Tibial artery (tissue), 4 donors: ENCODE measurements at regions of chr16 and their contacts with region 1.

Region 1: DNA sequence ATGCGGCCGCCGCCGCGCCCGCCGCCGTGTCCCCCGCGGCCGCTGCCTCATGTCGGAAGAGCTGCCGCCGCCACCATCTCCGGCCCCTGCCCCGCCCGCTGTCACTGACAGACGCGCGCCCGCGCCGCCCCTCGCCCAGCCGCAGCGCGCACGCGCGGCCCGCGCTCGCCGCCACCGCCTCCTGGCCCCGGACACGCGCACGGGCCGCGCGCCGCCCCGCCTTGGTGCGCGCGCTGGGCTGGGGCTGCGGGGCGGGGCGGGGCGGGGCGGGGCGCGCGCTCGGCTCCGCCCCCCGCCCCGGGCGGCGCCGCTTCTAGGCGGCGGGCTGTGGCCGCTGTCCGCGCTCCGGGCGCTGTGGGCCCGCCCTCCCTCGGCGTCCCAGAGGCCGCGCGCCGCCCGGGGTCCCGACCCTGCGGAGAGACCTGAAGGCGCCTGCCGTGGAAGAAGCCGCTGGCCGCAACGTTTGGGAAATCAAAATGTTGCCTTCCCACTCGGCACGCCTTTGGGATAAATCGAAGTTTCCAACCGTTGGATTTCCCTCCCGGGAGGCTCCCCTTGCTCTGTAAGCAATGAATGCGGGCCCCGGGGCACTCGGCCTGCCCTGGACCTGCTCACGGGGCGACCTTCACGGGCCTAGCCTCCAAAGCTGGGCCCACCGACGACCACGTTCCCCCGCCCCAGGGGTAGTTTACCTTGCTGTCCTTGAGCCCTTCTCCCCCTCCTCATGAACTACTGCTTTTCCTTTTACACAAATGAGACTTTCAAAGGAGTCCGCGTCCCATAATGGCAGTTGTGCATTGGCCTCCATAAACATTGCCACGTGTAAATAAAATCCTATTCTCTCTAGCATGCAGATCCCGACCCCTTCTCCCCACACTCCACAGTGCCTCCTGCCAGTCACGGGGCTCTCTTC is at the start of gene ADCY9:
- DNase-seq: peak; percentile 69 to 86
- H3K4me3 ChIP-seq: peak within 1 kb of the TSS; percentile 68 to 72
- H3K27ac ChIP-seq: peak within 1 kb of the TSS; percentile 88 to 89
- H3K4me1 ChIP-seq: peaks cover 0 to 34% (median 25%) of the 10 kb centered on the region in 4 donors
- H3K27me3 ChIP-seq: no peaks in the 10 kb centered on the region
- CTCF ChIP-seq: no peak

Region 2: DNA sequence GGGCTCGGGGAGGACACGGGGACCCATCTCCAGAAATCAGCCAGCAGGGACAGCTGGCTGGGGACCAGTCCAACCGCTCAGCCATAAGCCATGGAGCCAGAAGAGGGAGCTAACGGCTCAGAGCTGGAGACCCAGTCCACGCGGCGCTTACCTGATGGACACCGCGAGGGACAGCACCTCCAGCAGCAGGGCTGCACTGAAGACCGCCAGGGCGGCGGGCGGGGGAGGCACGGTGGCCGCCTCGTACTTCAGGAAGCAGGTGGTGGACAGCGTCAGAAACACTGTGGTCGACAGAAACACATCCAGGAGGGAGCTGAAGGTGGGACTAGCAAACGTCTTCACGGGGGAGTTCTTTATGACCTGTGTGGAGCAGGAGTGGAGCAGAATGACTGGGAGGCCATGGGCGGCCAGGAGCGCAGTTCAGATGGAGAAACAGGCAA is 133.5 kb before region 1 on chr16:
- intact Hi-C with region 1: loop called (anchors 10 kb)
- DNase-seq: peak; percentile 58 to 78
- H3K4me3 ChIP-seq: no peak overlapping the region
- H3K27ac ChIP-seq: no peak overlapping the region
- H3K4me1 ChIP-seq: peaks cover 0 to 22% (median 9%) of the 10 kb centered on the region in 4 donors
- H3K27me3 ChIP-seq: no peaks in the 10 kb centered on the region
- CTCF ChIP-seq: peak; percentile 67 to 73

Region 3: DNA sequence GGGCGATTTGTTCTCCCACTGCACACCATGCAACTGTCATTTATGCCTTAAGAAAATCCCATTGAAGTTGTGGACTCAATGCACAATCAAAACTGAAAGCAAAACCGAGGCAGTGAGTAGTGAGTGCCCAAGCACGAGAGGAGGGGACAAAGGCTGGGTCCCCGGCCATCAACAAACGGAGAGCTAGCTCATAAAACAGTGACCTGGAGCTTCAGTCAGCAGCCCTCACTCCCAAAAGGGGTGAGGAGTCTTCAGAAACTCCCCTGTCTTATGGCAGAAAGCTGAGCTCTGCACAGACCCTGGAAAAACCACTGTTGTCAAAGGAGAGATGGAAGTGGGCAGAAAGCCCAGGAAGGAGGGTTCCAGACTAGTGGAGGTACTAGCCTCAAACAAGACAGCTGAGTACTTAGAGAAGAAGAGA is 97.2 kb before region 1 on chr16:
- intact Hi-C with region 1: loop called (anchors 10 kb)
- DNase-seq: no peak
- H3K4me3 ChIP-seq: peak overlapping the region; percentile 34 to 41
- H3K27ac ChIP-seq: peak overlapping the region; percentile 25 to 36
- H3K4me1 ChIP-seq: peaks cover 0 to 26% (median 13%) of the 10 kb centered on the region in 4 donors
- H3K27me3 ChIP-seq: no peaks in the 10 kb centered on the region
- CTCF ChIP-seq: no peak

Region 4: GRCh38 chr16:4064950-4065352 is 51.6 kb before region 1 on chr16:
- intact Hi-C with region 1: no loop called
- DNase-seq: no peak
- H3K4me3 ChIP-seq: peak overlapping the region; percentile 12 to 16
- H3K27ac ChIP-seq: no peak overlapping the region
- H3K4me1 ChIP-seq: peaks cover 0 to 14% (median 0%) of the 10 kb centered on the region in 4 donors
- H3K27me3 ChIP-seq: no peaks in the 10 kb centered on the region
- CTCF ChIP-seq: no peak

Region 5: GRCh38 chr16:4183237-4184036 is 66.8 kb after region 1 on chr16:
- intact Hi-C with region 1: loop called (anchors 5 kb)
- DNase-seq: peak; percentile 83 to 96
- H3K4me3 ChIP-seq: peak overlapping the region; percentile 63 to 79
- H3K27ac ChIP-seq: peak overlapping the region; percentile 89 to 93
- H3K4me1 ChIP-seq: peaks cover 0 to 12% (median 7%) of the 10 kb centered on the region in 4 donors
- H3K27me3 ChIP-seq: no peaks in the 10 kb centered on the region
- CTCF ChIP-seq: no peak

Region 6: DNA sequence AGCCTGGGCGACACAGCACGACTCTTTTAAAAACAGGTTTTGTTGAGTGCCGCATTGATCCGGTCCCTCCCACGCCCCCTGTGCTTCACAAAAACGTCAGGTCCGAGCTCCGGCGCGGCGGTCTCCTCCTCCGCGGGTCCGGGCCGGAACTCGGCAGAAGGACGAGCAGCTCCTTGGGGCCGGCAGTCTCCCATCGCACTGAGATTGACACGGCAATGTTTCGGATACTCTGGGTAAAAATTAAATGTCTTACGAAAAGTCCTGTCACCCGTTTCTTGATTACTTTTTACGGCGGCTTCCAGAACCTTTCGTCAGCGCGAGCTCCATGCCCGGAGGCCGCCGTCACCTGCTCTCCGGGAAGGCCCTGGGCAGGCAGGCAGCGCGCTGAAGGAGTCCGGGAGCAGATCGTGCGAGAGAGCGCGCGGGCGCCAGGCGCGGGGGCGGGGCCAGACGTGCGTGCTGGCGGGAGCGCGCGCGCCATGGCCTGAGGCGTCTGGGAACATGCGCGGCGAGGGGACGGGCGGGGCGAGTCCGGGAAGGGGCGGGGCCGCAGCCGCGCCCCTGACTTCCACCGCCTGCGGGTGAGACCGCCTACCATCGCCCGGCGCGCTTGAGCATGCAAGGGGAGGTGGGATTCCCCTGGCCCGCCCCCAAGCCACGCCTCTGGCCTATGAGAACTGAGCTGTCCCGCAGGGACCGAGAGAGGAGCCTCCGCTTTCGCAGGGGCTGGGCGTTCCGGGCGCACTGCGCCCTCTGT is 137.0 kb after region 1 on chr16:
- intact Hi-C with region 1: loop called (anchors 5 kb)
- DNase-seq: peak; percentile 100
- H3K4me3 ChIP-seq: peak overlapping the region; percentile 58 to 75
- H3K27ac ChIP-seq: peak overlapping the region; percentile 93 to 95
- H3K4me1 ChIP-seq: peaks cover 0 to 6% (median 2%) of the 10 kb centered on the region in 4 donors
- H3K27me3 ChIP-seq: no peaks in the 10 kb centered on the region
- CTCF ChIP-seq: no peak

Region 7: GRCh38 chr16:4271176-4272066 is 154.8 kb after region 1 on chr16:
- intact Hi-C with region 1: no loop called
- DNase-seq: peak; percentile 91 to 95
- H3K4me3 ChIP-seq: peak overlapping the region; percentile 96 to 98
- H3K27ac ChIP-seq: peak overlapping the region; percentile 89 to 93
- H3K4me1 ChIP-seq: peaks cover 0 to 17% (median 14%) of the 10 kb centered on the region in 4 donors
- H3K27me3 ChIP-seq: no peaks in the 10 kb centered on the region
- CTCF ChIP-seq: peak in 1 of 2 experiments; percentile 8

Region 8: GRCh38 chr16:4416200-4417032 is 299.8 kb after region 1 on chr16 and contains the start of gene CORO7:
- intact Hi-C with region 1: no loop called
- DNase-seq: peak; percentile 95 to 98
- H3K4me3 ChIP-seq: peak within 1 kb of the TSS; percentile 73 to 94
- H3K27ac ChIP-seq: peak within 1 kb of the TSS; percentile 71 to 74
- H3K4me1 ChIP-seq: peaks cover 0 to 17% (median 14%) of the 10 kb centered on the region in 4 donors
- H3K27me3 ChIP-seq: no peaks in the 10 kb centered on the region
- CTCF ChIP-seq: peak in 1 of 2 experiments; percentile 48